ENCODE measurements at regions of chr6 and their contacts with region 1.

Region 1: GRCh38 chr6:139291813-139292619 is at the start of gene TXLNB:
- DNase-seq: peak; percentile 80
- H3K4me3 Mint-ChIP-seq: peak within 1 kb of the TSS; percentile 73
- H3K27ac Mint-ChIP-seq: peak within 1 kb of the TSS; percentile 98
- H3K4me1 Mint-ChIP-seq: peaks cover 84% of the 10 kb centered on the region
- H3K27me3 Mint-ChIP-seq: peaks cover 2% of the 10 kb centered on the region
- total RNA-seq, gene TXLNB: 0.08 TPM in 1 of 2 replicates, not detected in the other

Region 2: GRCh38 chr6:137676888-137677287 is 1615.1 kb before region 1 on chr6:
- intact Hi-C with region 1: loop called (anchors 5 kb)
- DNase-seq: no peak
- H3K4me3 Mint-ChIP-seq: peak overlapping the region; percentile 20
- H3K27ac Mint-ChIP-seq: peak overlapping the region; percentile 88
- H3K4me1 Mint-ChIP-seq: peaks cover 63% of the 10 kb centered on the region
- H3K27me3 Mint-ChIP-seq: peaks cover 3% of the 10 kb centered on the region

Region 3: GRCh38 chr6:139028658-139029469 is 263.2 kb before region 1 on chr6 and contains the start of gene ABRACL:
- intact Hi-C with region 1: loop called (anchors 2 kb)
- DNase-seq: peak; percentile 73
- H3K4me3 Mint-ChIP-seq: peak within 1 kb of the TSS; percentile 93
- H3K27ac Mint-ChIP-seq: peak within 1 kb of the TSS; percentile 82
- H3K4me1 Mint-ChIP-seq: peaks cover 29% of the 10 kb centered on the region
- H3K27me3 Mint-ChIP-seq: no peaks in the 10 kb centered on the region
- total RNA-seq, gene ABRACL: 129 and 135 TPM in 2 replicates

Region 4: GRCh38 chr6:139161817-139162284 is 130.2 kb before region 1 on chr6:
- intact Hi-C with region 1: loop called (anchors 1 kb)
- DNase-seq: peak; percentile 72
- H3K4me3 Mint-ChIP-seq: peak overlapping the region; percentile 68
- H3K27ac Mint-ChIP-seq: peak overlapping the region; percentile 97
- H3K4me1 Mint-ChIP-seq: peaks cover 71% of the 10 kb centered on the region
- H3K27me3 Mint-ChIP-seq: no peaks in the 10 kb centered on the region

Region 5: DNA sequence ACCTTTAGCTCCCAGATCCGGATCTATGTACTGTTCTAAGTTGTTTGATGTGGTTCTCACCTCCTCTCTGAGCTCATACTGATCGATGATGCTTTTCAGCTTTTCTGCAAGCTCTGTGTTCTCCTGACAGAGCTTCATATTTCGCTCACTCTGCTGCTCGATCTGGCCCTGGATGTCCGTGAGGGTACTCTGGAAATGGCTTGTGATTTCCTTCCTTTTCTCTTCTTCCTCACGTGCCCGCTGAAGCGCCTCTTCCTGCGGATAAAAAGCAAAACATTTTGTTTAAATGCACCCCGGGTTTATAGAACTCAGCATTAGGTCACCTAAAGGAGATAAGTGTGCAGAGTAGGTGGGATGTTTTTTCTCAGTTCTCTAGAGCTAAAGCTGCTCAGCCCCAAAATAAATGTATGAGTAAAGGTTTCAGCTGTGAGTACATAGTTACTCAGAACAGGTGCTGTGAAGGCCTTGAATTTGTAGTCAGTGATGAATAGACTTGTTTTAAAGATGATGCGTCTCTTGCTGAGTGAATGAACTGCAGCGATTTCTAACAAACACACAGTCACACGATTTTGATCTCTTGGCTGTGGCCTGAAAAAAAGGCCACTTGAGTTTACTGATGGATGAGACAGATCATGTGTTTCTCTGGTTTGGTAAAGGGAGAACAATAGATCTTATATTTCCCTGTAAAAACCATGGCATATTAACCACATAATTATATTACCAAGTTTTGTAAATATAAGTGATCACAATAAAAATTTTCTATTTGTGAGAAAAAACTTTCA is 29.3 kb before region 1 on chr6:
- intact Hi-C with region 1: loop called (anchors 1 kb)
- DNase-seq: peak; percentile 24
- H3K4me3 Mint-ChIP-seq: peak overlapping the region; percentile 72
- H3K27ac Mint-ChIP-seq: peak overlapping the region; percentile 90
- H3K4me1 Mint-ChIP-seq: peaks cover 37% of the 10 kb centered on the region
- H3K27me3 Mint-ChIP-seq: no peaks in the 10 kb centered on the region

Region 6: GRCh38 chr6:139323511-139324300 is 31.7 kb after region 1 on chr6:
- intact Hi-C with region 1: loop called (anchors 1 kb)
- DNase-seq: peak; percentile 70
- H3K4me3 Mint-ChIP-seq: peak overlapping the region; percentile 63
- H3K27ac Mint-ChIP-seq: peak overlapping the region; percentile 90
- H3K4me1 Mint-ChIP-seq: peaks cover 43% of the 10 kb centered on the region
- H3K27me3 Mint-ChIP-seq: no peaks in the 10 kb centered on the region

Region 7: DNA sequence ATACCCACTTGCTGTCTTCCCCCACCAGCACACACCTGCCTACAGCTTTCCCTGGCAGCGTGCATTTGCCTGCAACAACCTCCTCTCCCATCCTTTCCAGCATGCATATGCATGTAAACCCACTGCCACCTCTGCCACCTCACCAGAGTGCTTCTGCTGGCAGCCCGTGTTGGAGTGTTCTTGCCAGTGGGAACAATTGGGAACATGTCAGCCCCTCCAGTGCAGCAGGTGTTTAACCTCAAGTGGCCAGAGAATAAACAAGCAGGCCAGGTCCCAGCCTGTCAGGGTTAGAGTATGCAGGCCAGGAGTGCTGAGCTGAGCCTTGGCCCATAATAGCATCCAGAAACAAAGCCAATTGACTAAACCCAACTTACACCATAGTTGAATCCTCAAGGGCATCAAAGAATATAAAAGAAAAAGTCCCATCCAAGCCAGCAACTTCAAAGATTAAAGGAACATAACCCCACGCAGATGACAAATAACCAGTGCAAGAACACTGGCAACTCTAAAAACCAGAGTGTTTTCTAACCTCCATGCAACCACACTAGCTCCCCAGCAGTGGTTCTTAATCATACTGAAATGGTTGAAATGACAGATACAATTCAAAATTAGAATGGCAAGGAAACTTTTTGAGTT is 1294.5 kb after region 1 on chr6:
- intact Hi-C with region 1: loop called (anchors 1 kb)
- DNase-seq: peak; percentile 46
- H3K4me3 Mint-ChIP-seq: peak overlapping the region; percentile 32
- H3K27ac Mint-ChIP-seq: peak overlapping the region; percentile 94
- H3K4me1 Mint-ChIP-seq: peaks cover 48% of the 10 kb centered on the region
- H3K27me3 Mint-ChIP-seq: peaks cover 2% of the 10 kb centered on the region

Measured in activated T-helper 1 cell treated with anti-CD3 and anti-CD28 coated beads, Interleukin-12 subunit alpha, Interleukin-12 subunit beta, Interleukin-2, Interleukin-4 antibody, amounts not matched to agents 30 ng/mL and 10 ng/mL and 1 ng/mL, durations not matched to agents 14 hours and 24 hours and 36 hours (primary cell).